Activated CD4-positive, alpha-beta T cell treated with anti-CD3 and anti-CD28 coated beads for 36 hours (primary cell): ENCODE measurements at regions of chr17 and their contacts with region 1.

Region 1: GRCh38 chr17:1628856-1629646 is 417 bp upstream of the SLC43A2 start:
- DNase-seq: peak; percentile 93
- ATAC-seq: peak; percentile 80
- H3K4me3 Mint-ChIP-seq: peak overlapping the region; percentile 76
- H3K27ac Mint-ChIP-seq: peak overlapping the region; percentile 56
- H3K4me1 Mint-ChIP-seq: peaks cover 7% of the 10 kb centered on the region
- H3K27me3 Mint-ChIP-seq: peaks cover 12% of the 10 kb centered on the region

Region 2: DNA sequence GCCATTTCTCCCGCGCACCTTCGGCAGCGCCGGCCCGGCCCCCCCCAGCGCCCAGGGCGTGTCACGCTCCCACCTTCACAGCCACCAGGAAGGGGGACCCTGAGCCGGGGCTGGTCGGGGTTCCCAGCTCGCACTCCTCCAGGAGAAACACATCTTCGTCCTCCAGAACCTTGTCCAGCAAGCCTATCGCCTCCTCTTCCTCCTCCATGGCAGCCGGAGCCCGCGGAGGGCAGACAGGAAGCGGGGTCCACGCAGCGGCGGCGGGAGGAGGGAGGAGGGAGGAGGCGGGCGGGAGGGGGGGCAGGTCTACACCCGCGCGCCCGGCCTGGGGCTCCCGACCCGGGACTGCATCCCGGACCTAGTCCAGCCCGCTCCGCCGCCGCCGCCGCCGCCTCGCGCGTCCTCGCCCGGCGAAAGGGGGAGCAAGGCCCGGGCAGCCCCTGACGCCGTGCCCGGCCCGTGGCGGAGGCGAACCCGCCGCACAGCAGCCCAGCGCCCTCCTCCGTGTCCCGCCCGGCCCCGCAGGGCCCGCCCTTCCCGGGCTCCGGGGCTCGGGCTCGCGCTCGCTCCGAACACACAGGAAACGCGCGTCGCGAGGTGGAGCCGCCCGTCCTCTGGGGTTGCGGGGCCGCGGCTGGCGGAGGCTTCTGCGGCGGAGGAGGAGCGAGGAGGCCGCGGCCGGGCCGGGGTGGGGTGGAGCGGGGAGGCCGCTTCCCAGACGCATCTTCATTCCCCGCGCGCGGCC is 520.0 kb before region 1 on chr17:
- CTCF ChIA-PET with region 1: no interaction called
- POLR2A ChIA-PET with region 1: no interaction called
- intact Hi-C with region 1: loop called in 1 of 2 experiments (anchors 5 kb)
- DNase-seq: peak; percentile 78
- ATAC-seq: peak; percentile 75
- H3K4me3 Mint-ChIP-seq: peak overlapping the region; percentile 79
- H3K27ac Mint-ChIP-seq: peak overlapping the region; percentile 80
- H3K4me1 Mint-ChIP-seq: peaks cover 36% of the 10 kb centered on the region
- H3K27me3 Mint-ChIP-seq: no peaks in the 10 kb centered on the region

Region 3: DNA sequence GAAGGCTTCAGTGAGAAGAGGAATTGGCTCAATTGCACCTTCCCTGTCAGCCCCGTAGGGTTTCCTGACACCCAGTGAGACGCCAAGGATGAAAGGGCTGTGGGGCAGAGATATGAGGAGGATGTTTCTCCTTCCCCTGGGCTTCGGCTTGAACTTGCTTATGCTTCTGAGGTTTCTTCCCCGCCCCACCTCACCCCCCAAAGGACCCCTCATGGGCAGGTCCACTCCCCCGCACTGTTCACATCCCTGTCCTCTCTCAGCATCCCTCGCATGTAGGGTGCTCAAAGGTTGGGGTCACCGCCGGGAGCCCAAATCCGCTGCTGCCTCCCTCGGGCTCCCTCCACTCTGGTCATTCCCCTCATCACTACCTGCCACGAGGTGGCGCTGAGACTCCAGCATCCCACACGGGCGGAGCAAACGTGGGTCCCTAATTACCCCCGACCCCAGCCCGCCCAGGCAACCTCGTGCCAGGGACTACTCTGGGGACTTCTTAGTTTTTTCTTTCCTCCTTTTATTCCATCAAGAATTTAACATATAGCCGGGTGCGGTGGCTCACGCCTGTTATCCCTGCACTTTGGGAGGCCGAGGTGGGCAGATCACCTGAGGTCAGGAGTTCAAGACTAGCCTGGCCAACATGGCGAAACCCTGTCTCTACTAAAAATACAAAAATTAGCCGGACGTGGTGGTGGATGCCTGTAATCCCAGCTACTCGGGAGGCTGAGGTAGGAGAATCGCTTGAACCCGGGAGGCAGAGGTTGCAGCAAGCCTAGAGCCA is 352.9 kb before region 1 on chr17:
- CTCF ChIA-PET with region 1: no interaction called
- POLR2A ChIA-PET with region 1: no interaction called
- intact Hi-C with region 1: loop called in 1 of 2 experiments (anchors 1 kb)
- DNase-seq: peak; percentile 84
- ATAC-seq: peak; percentile 91
- H3K4me3 Mint-ChIP-seq: no peak overlapping the region
- H3K27ac Mint-ChIP-seq: no peak overlapping the region
- H3K4me1 Mint-ChIP-seq: peaks cover 4% of the 10 kb centered on the region
- H3K27me3 Mint-ChIP-seq: peaks cover 25% of the 10 kb centered on the region

Region 4: DNA sequence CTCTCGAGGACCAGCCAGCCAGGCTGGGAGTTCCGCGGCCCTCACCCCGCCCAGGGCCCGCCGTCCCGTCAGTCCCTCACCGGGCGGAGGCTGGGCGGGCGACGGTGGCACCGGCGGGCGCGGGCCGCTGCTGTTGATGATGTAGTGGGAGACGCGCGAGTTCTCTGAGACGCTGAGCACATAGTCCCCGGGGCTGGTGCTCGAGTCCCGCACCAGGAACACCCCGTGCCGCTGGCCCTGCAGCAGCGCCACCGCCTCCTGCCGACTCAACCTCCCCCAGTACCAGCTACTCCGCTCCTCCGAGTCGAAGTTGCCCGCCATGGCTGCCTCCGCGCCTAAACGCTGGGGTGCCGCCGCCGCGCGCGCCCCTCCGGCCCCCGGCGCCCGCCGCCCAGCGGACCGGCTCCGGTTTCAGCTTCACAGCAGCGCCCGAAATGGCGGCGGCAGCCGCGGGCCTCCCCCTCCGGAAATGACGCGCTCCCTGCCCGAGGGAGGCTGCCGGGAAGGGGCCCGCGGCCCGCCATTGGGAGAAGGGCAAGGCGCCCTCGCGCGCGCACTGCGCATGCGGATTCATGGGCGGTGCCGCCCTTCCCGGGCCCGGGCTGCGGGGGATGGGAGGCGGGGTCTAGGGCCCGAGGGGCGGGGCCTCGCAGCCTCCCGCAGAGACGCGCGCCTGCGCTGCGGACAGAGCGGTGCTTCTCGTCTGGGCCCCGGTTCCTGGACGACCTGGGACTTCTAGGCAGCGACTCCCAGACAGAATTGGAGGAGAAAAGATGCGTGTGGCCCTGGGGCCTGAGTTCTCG is 173.1 kb before region 1 on chr17 and contains the start of gene CRK:
- CTCF ChIA-PET with region 1: no interaction called
- POLR2A ChIA-PET with region 1: no interaction called
- intact Hi-C with region 1: loop called in 1 of 2 experiments (anchors 1 kb)
- DNase-seq: peak; percentile 99
- ATAC-seq: peak; percentile 93
- H3K4me3 Mint-ChIP-seq: peak within 1 kb of the TSS; percentile 82
- H3K27ac Mint-ChIP-seq: peak within 1 kb of the TSS; percentile 89
- H3K4me1 Mint-ChIP-seq: peaks cover 46% of the 10 kb centered on the region
- H3K27me3 Mint-ChIP-seq: peaks cover 9% of the 10 kb centered on the region
- total RNA-seq, gene CRK: 10.1 to 11.6 TPM

Region 5: GRCh38 chr17:1561400-1562175 is 67.5 kb before region 1 on chr17:
- CTCF ChIA-PET with region 1: interaction called, 5 read pairs
- POLR2A ChIA-PET with region 1: no interaction called
- intact Hi-C with region 1: loop called in 1 of 2 experiments (anchors 1 kb)
- DNase-seq: peak; percentile 64
- ATAC-seq: peak; percentile 35
- H3K4me3 Mint-ChIP-seq: peak overlapping the region; percentile 81
- H3K27ac Mint-ChIP-seq: no peak overlapping the region
- H3K4me1 Mint-ChIP-seq: peaks cover 27% of the 10 kb centered on the region
- H3K27me3 Mint-ChIP-seq: no peaks in the 10 kb centered on the region

Region 6: DNA sequence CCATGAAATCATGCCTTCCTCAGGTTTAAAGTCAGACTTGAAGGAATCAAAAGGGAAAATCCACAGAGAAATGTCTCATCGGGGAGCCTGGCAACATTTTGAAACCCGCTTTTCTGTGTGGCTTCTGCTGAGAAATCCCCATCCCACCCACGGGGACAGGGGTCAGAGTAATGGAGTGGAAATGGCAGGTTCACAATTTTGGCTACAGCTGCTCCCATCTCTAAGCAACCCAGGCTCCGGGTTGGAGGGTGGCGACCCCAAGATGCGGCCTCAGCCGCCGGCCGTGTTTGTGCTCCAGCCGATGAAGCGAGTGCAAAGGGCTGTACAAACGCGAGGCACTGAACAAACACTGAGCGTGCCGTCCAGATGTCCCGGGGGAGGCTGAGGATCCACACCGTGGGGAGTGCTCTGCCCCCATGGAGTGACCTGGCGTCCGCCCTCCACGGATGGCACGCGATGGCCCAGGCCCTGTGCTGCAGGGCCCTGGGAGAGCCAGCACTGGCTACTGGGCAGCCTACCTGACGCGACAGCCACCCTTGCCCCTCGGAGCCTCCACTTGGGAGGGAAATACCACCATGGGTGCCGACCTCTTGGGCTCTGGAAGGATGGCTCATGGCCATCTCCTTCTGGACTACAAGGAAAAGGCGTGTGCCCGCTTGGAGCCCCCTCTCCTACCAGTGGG is 22.6 kb before region 1 on chr17:
- CTCF ChIA-PET with region 1: interaction called, 3 read pairs
- POLR2A ChIA-PET with region 1: interaction called, 4 read pairs
- intact Hi-C with region 1: loop called in 1 of 2 experiments (anchors 1 kb)
- DNase-seq: peak; percentile 67
- ATAC-seq: no peak
- H3K4me3 Mint-ChIP-seq: peak overlapping the region; percentile 21
- H3K27ac Mint-ChIP-seq: peak overlapping the region; percentile 85
- H3K4me1 Mint-ChIP-seq: peaks cover 25% of the 10 kb centered on the region
- H3K27me3 Mint-ChIP-seq: no peaks in the 10 kb centered on the region

Region 7: GRCh38 chr17:1673041-1673785 is 44.2 kb after region 1 on chr17:
- CTCF ChIA-PET with region 1: no interaction called
- POLR2A ChIA-PET with region 1: no interaction called
- intact Hi-C with region 1: no loop called
- DNase-seq: peak; percentile 34
- ATAC-seq: peak; percentile 62
- H3K4me3 Mint-ChIP-seq: no peak overlapping the region
- H3K27ac Mint-ChIP-seq: peak overlapping the region; percentile 70
- H3K4me1 Mint-ChIP-seq: peaks cover 11% of the 10 kb centered on the region
- H3K27me3 Mint-ChIP-seq: no peaks in the 10 kb centered on the region

Region 8: DNA sequence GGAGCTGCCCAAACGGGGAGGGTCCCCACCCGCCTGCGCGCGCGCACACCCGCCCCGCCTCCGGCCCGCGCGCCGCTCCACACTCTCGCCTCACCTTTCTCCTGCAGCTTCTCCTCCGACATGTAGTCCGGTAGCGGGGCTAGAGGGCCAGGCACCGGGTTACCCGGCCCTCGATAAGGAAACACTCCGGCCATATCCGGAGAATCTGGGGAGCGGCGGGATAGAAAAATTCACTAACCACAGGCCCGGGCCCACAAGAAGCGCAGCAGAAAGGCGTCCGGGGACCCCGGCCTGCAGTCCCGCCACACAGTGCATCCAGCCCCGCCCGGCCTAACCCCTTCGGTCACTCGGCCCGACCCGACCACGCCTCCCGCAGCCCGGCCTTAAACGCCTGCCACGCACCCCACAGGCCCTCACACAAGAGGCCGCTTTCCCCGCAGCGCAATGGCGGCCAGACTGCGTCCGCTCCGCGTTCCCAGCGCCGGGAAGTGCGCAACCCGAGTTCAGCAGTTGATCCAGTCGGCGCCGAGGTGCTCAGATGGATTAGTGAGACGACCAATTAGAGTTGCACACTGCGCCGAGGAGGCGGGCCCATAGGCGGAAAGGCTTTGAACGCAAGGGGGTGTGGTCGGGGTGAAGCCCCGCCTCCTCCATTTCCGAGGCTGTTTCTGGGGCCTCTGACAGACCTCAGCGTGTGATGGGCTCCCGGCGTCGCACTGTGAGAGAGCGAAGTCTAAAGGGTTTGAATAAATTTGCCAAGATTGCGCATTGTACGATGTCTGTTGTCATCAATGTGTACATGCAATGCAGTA is 55.5 kb after region 1 on chr17 and contains the start of gene PRPF8:
- CTCF ChIA-PET with region 1: no interaction called
- POLR2A ChIA-PET with region 1: no interaction called
- intact Hi-C with region 1: loop called in 1 of 2 experiments (anchors 1 kb)
- DNase-seq: peak; percentile 99
- ATAC-seq: peak; percentile 100
- H3K4me3 Mint-ChIP-seq: peak within 1 kb of the TSS; percentile 98
- H3K27ac Mint-ChIP-seq: peak within 1 kb of the TSS; percentile 93
- H3K4me1 Mint-ChIP-seq: peaks cover 34% of the 10 kb centered on the region
- H3K27me3 Mint-ChIP-seq: no peaks in the 10 kb centered on the region
- total RNA-seq, gene PRPF8: 391 to 425 TPM